Activated CD8-positive, alpha-beta T cell treated with anti-CD3 and anti-CD28 coated beads, Interleukin-2, amount 10 ng/mL, durations not matched to agents 7 days and 5 days (primary cell): ENCODE measurements at regions of chr20 and their contacts with region 1.

Region 1: GRCh38 chr20:36613974-36614373 is 8.4 kb downstream of the RAB5IF start:
- DNase-seq: no peak
- ATAC-seq: no peak
- H3K4me3 Mint-ChIP-seq: no peak overlapping the region
- H3K27ac Mint-ChIP-seq: peak overlapping the region; percentile 52
- H3K4me1 Mint-ChIP-seq: peaks cover 27% of the 10 kb centered on the region
- H3K27me3 Mint-ChIP-seq: no peaks in the 10 kb centered on the region

Region 2: GRCh38 chr20:36582322-36582721 is 31.7 kb before region 1 on chr20:
- CTCF ChIA-PET with region 1: no interaction called
- POLR2A ChIA-PET with region 1: no interaction called
- DNase-seq: peak; percentile 69
- ATAC-seq: peak; percentile 82
- H3K4me3 Mint-ChIP-seq: no peak overlapping the region
- H3K27ac Mint-ChIP-seq: peak overlapping the region; percentile 90
- H3K4me1 Mint-ChIP-seq: peaks cover 36% of the 10 kb centered on the region
- H3K27me3 Mint-ChIP-seq: no peaks in the 10 kb centered on the region

Region 3: DNA sequence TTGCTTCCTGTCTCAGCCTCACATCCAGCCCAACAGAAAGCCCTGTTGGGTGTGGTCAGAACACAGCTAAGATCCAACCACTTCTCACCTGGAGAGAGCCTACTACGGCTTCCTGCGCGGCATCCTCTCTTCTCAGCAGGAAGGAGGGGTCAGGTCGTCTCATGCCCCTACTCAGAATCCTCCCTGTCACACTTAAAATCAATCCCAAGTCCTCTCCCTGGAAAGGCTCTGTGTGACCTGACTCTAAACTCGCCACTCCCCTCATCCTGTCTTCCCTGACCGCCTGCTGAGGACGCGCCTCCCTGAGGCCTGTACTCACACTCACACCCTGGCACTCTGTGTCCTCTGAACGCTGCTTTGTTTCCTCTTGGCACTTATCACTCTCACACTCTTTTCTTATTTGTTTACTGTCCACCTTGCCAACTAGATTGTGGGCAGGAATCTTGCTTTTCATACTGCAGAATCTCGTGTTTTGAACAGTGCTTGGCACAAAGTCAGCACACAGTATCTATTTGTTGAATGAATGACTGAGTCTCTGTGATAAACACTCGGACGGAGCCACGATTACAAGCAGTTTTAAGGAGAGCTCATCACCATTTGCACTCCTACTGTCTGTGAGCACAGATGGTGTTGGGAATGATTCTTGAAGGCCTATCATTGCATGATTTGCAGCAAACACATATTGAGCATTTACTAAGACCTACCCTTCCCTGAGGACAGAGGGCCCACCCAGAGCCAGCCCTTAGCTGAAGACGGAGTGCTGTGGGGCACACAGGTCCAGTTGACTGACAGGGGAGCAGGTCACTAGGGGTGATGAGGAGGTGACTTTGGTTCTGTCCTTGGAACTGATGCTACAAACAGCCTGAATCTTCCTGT is 10.3 kb after region 1 on chr20:
- CTCF ChIA-PET with region 1: interaction called, 7 read pairs
- POLR2A ChIA-PET with region 1: interaction called, 10 read pairs
- DNase-seq: no peak
- ATAC-seq: no peak
- H3K4me3 Mint-ChIP-seq: no peak overlapping the region
- H3K27ac Mint-ChIP-seq: peak overlapping the region; percentile 66
- H3K4me1 Mint-ChIP-seq: peaks cover 47% of the 10 kb centered on the region
- H3K27me3 Mint-ChIP-seq: no peaks in the 10 kb centered on the region